Activated T-helper 1 cell treated with anti-CD3 and anti-CD28 coated beads, Interleukin-12 subunit alpha, Interleukin-12 subunit beta, Interleukin-2, Interleukin-4 antibody, amounts not matched to agents 30 ng/mL and 10 ng/mL and 1 ng/mL, durations not matched to agents 14 hours and 24 hours and 36 hours (primary cell): ENCODE measurements at regions of chr17 and their contacts with region 1.

Region 1: GRCh38 chr17:49567871-49568694 is 7.6 kb upstream of the NXPH3 start:
- DNase-seq: peak; percentile 74
- H3K4me3 Mint-ChIP-seq: peak overlapping the region; percentile 55
- H3K27ac Mint-ChIP-seq: no peak overlapping the region
- H3K4me1 Mint-ChIP-seq: peaks cover 39% of the 10 kb centered on the region
- H3K27me3 Mint-ChIP-seq: peaks cover 36% of the 10 kb centered on the region

Region 2: GRCh38 chr17:49556223-49556971 is 11.7 kb before region 1 on chr17:
- intact Hi-C with region 1: loop called (anchors 1 kb)
- DNase-seq: peak; percentile 77
- H3K4me3 Mint-ChIP-seq: no peak overlapping the region
- H3K27ac Mint-ChIP-seq: no peak overlapping the region
- H3K4me1 Mint-ChIP-seq: peaks cover 9% of the 10 kb centered on the region
- H3K27me3 Mint-ChIP-seq: peaks cover 5% of the 10 kb centered on the region

Region 3: DNA sequence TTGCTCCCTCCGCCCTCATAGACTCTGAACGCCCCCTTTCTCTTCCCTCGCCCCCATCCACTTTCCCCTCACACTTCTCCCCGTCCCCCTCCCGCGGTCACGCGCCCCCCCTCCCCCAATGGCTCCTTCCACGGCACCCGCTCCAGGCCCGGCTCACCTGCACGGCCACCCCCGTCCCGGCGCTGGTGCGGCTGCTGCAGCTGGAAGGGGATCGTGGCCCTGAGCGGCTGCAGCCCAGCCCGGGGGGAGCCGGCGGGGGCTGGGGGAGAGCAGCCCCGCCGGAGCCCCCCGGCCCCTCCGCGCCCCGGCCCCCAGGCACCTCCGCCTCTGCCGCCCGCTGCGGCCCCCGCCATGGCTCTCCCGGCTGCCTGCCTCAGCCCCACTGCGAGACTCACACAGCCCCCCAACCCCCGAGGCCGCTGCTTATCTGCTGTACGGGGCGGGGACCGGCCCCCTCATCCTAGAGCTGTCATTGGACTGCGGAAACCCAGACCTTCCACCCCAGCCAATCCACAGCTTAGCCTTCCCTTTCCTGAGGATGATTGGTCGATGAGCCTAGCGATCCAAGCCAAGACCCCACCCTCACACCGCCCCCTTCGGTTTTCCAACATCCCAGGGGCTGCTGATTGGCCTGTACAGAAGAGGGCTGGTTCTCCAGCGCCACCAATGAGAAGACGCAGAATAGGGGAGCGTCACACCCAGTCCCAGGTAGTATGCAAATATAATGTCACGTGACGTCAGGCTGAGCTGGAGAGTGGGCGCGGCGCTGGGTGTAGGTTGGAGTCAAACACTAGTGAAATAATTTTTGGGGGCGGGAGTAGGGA is 195.9 kb after region 1 on chr17 and contains the start of gene FAM117A:
- intact Hi-C with region 1: loop called (anchors 1 kb)
- DNase-seq: peak; percentile 95
- H3K4me3 Mint-ChIP-seq: peak within 1 kb of the TSS; percentile 96
- H3K27ac Mint-ChIP-seq: peak within 1 kb of the TSS; percentile 90
- H3K4me1 Mint-ChIP-seq: peaks cover 54% of the 10 kb centered on the region
- H3K27me3 Mint-ChIP-seq: peaks cover 25% of the 10 kb centered on the region
- total RNA-seq, gene FAM117A: 13.9 and 14.8 TPM in 2 replicates

Region 4: GRCh38 chr17:49779739-49780231 is 211.7 kb after region 1 on chr17:
- intact Hi-C with region 1: loop called (anchors 1 kb)
- DNase-seq: no peak
- H3K4me3 Mint-ChIP-seq: no peak overlapping the region
- H3K27ac Mint-ChIP-seq: no peak overlapping the region
- H3K4me1 Mint-ChIP-seq: peaks cover 11% of the 10 kb centered on the region
- H3K27me3 Mint-ChIP-seq: peaks cover 5% of the 10 kb centered on the region

Region 5: DNA sequence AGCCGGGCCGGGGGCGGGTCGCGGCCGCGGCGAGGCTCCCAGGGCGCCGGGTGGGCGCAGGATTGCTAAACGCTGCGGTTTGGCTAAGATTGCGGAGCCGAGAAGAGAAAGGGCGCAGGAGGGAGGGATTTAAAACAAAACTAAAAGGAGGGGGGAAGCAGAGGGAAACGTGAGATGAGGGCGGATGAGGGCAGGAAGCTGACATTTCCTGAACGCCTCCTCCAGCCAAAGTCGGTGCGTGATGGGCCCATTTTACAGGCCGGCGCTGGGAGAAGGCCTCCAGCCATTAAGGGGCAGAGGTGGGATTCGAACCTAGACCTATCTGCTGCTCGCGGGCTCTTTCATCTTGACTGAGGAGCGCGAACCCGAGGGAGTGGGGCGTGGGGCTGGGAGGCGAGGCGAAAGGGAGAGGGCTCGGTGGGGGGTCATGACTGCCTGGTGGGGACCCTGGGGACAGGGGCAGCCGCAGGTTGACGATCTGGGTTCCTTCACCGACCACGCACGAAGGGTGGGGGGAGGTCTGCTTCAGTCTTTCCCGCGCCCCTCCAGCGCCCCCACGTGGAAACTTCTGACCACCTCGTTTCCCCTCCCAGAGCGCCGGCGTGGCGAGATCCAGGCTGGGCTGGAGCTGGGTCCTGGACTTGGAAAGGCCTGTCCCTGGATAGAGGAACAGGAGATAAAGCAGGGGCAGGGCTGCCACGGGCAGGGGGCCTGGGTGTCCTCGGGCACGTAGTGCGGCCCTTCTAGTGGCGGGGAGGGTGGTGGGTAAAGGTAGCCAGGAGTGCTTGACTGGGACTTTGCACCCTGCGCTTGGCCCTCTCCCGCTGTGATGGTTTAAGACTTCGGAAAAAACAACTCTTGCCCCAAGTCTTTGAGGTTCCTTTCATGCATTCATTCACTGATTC is 283.6 kb after region 1 on chr17:
- intact Hi-C with region 1: loop called (anchors 1 kb)
- DNase-seq: peak; percentile 46
- H3K4me3 Mint-ChIP-seq: peak overlapping the region; percentile 79
- H3K27ac Mint-ChIP-seq: peak overlapping the region; percentile 78
- H3K4me1 Mint-ChIP-seq: peaks cover 12% of the 10 kb centered on the region
- H3K27me3 Mint-ChIP-seq: peaks cover 15% of the 10 kb centered on the region

Region 6: DNA sequence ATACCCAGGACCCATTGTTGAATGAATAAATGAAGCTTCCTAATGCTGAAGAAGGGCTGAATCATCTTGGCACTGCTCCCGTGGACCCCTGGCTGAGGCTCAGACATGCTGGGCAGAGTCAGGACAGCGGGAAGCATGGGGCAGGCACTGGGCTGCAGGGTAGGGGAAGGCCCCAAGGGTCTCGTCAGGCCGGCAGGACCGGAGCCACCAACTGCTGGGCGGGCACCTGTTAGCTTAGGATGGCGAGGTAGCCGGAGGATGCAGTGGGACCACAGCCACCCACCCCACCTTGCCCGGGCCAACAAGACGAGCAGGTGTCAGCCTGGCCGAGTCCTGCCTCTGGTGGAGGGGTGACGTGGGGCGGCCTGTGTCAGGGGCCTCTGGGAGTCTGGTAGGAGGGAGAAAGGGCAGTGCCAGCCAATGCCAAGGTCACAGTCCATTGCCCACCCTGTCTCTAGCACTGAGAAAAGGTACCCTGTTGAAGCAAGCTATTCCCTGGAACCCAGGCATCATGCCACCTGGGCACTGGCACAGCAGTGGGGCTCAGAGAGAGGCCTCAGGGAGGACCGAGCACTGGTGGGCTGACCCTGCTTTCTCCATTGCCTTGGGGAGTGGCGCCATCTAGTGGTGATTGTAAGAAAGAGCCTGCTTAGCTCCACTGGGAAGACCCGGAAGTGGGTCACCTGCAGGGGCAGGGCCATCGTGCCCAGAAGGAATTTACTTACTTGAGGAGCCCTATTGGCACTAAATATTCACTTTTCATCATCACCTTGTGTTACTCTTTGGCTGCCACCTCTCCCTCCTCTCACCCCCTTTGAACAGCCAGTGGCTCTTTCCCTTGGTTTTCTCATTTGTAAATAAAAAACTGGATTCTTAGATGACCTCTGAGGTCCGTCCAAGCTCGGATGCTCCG is 430.0 kb after region 1 on chr17:
- intact Hi-C with region 1: loop called (anchors 1 kb)
- DNase-seq: peak; percentile 76
- H3K4me3 Mint-ChIP-seq: no peak overlapping the region
- H3K27ac Mint-ChIP-seq: no peak overlapping the region
- H3K4me1 Mint-ChIP-seq: peaks cover 16% of the 10 kb centered on the region
- H3K27me3 Mint-ChIP-seq: peaks cover 60% of the 10 kb centered on the region

Region 7: GRCh38 chr17:50087246-50087911 is 519.3 kb after region 1 on chr17:
- intact Hi-C with region 1: loop called (anchors 2 kb)
- DNase-seq: peak; percentile 72
- H3K4me3 Mint-ChIP-seq: no peak overlapping the region
- H3K27ac Mint-ChIP-seq: no peak overlapping the region
- H3K4me1 Mint-ChIP-seq: no peaks in the 10 kb centered on the region
- H3K27me3 Mint-ChIP-seq: no peaks in the 10 kb centered on the region